ENCODE measurements at regions of chr9 and their contacts with region 1.

Region 1: GRCh38 chr9:97615439-97616072 is 17.6 kb downstream of the TSTD2 start:
- DNase-seq: no peak
- ATAC-seq: peak; percentile 73
- H3K4me3 ChIP-seq: no peak overlapping the region
- H3K27ac ChIP-seq: no peak overlapping the region
- H3K4me1 ChIP-seq: peaks cover 10% of the 10 kb centered on the region; the same call in 1 of the 2 replicates
- H3K27me3 ChIP-seq: no peaks in the 10 kb centered on the region
- CTCF ChIP-seq: peak; percentile 63 to 84 (median 80)
- EP300 ChIP-seq: no peak
- POLR2A ChIP-seq: no peak
- RAD21 ChIP-seq: peak; percentile 86

Region 2: GRCh38 chr9:97386733-97387503 is 228.6 kb before region 1 on chr9:
- CTCF ChIA-PET with region 1: interaction called, 55 read pairs
- POLR2A ChIA-PET with region 1: no interaction called
- RAD21 ChIA-PET with region 1: interaction called, 9 read pairs
- SMC1A ChIA-PET with region 1: interaction called, 15 read pairs
- in situ Hi-C with region 1: no loop called
- intact Hi-C with region 1: loop called (anchors 1 kb)
- DNase-seq: no peak
- ATAC-seq: peak; percentile 44
- H3K4me3 ChIP-seq: no peak overlapping the region
- H3K27ac ChIP-seq: no peak overlapping the region
- H3K4me1 ChIP-seq: peaks cover 43% of the 10 kb centered on the region
- H3K27me3 ChIP-seq: no peaks in the 10 kb centered on the region
- CTCF ChIP-seq: peak; percentile 95 to 100 (median 98)
- EP300 ChIP-seq: no peak
- POLR2A ChIP-seq: no peak
- RAD21 ChIP-seq: peak; percentile 91

Region 3: GRCh38 chr9:97411789-97412625 is 203.5 kb before region 1 on chr9 and contains the start of gene TDRD7:
- CTCF ChIA-PET with region 1: interaction called, 51 read pairs
- POLR2A ChIA-PET with region 1: interaction called, 4 read pairs
- RAD21 ChIA-PET with region 1: interaction called, 19 read pairs
- SMC1A ChIA-PET with region 1: interaction called, 14 read pairs
- in situ Hi-C with region 1: loop called (anchors 5 kb)
- intact Hi-C with region 1: loop called (anchors 1 kb)
- DNase-seq: peak; percentile 50
- ATAC-seq: peak; percentile 85
- H3K4me3 ChIP-seq: peak within 1 kb of the TSS; percentile 86
- H3K27ac ChIP-seq: peak within 1 kb of the TSS; percentile 23
- H3K4me1 ChIP-seq: peaks cover 3% of the 10 kb centered on the region; the same call in 1 of the 2 replicates
- H3K27me3 ChIP-seq: no peaks in the 10 kb centered on the region; a peak in 1 of 4 replicates
- CTCF ChIP-seq: peak; percentile 96 to 100 (median 99); a peak in 5 of 6 replicates
- EP300 ChIP-seq: peak; percentile 16 to 49; a peak in 1 of 4 replicates
- POLR2A ChIP-seq: peak; percentile 69
- RAD21 ChIP-seq: peak; percentile 71
- polyA plus RNA-seq, gene TDRD7: 5.7 to 8.3 TPM

Region 4: GRCh38 chr9:97475059-97475458 is 140.5 kb before region 1 on chr9:
- CTCF ChIA-PET with region 1: interaction called, 515 read pairs
- POLR2A ChIA-PET with region 1: interaction called, 7 read pairs
- RAD21 ChIA-PET with region 1: interaction called, 270 read pairs
- SMC1A ChIA-PET with region 1: interaction called, 253 read pairs
- in situ Hi-C with region 1: no loop called
- intact Hi-C with region 1: no loop called
- DNase-seq: no peak
- ATAC-seq: no peak
- H3K4me3 ChIP-seq: no peak overlapping the region
- H3K27ac ChIP-seq: no peak overlapping the region
- H3K4me1 ChIP-seq: peaks cover under 1% of the 10 kb centered on the region; the same call in 1 of the 2 replicates
- H3K27me3 ChIP-seq: no peaks in the 10 kb centered on the region
- CTCF ChIP-seq: no peak
- EP300 ChIP-seq: no peak
- POLR2A ChIP-seq: no peak
- RAD21 ChIP-seq: no peak

Region 5: DNA sequence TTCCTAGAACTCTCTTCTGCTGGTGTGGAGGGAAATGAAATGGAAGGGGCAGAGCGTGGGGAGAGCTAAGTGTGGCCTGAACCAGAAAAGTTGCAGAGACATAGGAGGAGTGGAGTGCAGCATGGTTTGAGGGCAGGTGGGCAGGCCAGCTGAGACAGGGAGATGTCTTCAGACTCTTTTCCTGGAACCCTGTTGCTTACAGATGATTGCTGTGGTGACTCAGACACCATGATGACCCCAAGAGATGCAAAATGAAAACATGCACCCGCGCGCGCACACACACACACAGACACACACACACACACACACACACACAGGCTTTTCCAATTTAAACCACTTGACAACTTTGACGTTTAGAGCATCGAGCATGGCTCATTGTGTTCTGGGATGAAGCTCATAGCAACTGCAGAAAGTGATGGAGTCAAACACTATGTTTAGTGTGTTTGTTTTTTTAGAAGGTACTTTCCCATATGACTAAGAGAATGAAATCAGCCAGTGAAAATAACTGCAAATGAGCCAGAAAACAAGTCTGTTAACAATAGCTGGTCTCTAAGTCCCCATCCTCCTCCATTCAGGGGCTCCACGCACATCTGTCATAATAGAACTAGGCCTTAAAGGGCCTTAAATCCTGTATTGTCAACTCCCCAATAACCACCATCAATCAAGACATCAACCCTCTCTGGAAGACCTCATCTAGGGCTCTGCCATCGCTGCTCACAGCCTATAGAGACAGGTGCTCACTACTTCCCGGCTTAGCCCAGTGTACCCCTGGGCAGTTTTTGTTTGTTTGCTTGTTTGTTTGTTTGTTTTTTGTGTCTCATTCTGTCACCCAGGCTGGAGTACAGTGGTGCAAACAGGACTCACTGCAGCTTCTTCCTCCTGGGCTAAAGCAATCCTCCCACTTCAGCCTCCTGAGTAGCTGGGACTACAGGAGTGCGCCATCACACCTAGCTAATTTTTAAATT is 104.5 kb before region 1 on chr9:
- CTCF ChIA-PET with region 1: interaction called, 25 read pairs
- POLR2A ChIA-PET with region 1: no interaction called
- RAD21 ChIA-PET with region 1: interaction called, 10 read pairs
- SMC1A ChIA-PET with region 1: interaction called, 13 read pairs
- in situ Hi-C with region 1: no loop called
- intact Hi-C with region 1: no loop called
- DNase-seq: peak; percentile 84
- ATAC-seq: peak; percentile 91
- H3K4me3 ChIP-seq: peak overlapping the region; percentile 25; the same call in 1 of the 2 replicates
- H3K27ac ChIP-seq: peak overlapping the region; percentile 87
- H3K4me1 ChIP-seq: peaks cover 44% of the 10 kb centered on the region
- H3K27me3 ChIP-seq: no peaks in the 10 kb centered on the region
- CTCF ChIP-seq: no peak
- EP300 ChIP-seq: peak; percentile 63 to 93
- POLR2A ChIP-seq: no peak
- RAD21 ChIP-seq: no peak

Measured in GM12878 (cell line).